ENCODE measurements at regions of chr17 and their contacts with region 1.

Region 1: GRCh38 chr17:53483704-53484103 is 339.0 kb upstream of the KIF2B start:
- DNase-seq: no peak
- ATAC-seq: no peak
- H3K4me3 ChIP-seq: no peak overlapping the region
- H3K27ac ChIP-seq: no peak overlapping the region
- H3K4me1 ChIP-seq: no peaks in the 10 kb centered on the region
- H3K27me3 ChIP-seq: no peaks in the 10 kb centered on the region
- CTCF ChIP-seq: no peak
- EP300 ChIP-seq: no peak
- POLR2A ChIP-seq: no peak
- RAD21 ChIP-seq: no peak

Region 2: GRCh38 chr17:53462393-53462811 is 21.3 kb before region 1 on chr17:
- CTCF ChIA-PET with region 1: no interaction called
- POLR2A ChIA-PET with region 1: no interaction called
- in situ Hi-C with region 1: no loop called
- intact Hi-C with region 1: no loop called
- DNase-seq: no peak
- ATAC-seq: no peak
- H3K4me3 ChIP-seq: no peak overlapping the region
- H3K27ac ChIP-seq: no peak overlapping the region
- H3K4me1 ChIP-seq: no peaks in the 10 kb centered on the region
- H3K27me3 ChIP-seq: no peaks in the 10 kb centered on the region
- CTCF ChIP-seq: no peak
- EP300 ChIP-seq: no peak
- POLR2A ChIP-seq: no peak
- RAD21 ChIP-seq: no peak

Region 3: DNA sequence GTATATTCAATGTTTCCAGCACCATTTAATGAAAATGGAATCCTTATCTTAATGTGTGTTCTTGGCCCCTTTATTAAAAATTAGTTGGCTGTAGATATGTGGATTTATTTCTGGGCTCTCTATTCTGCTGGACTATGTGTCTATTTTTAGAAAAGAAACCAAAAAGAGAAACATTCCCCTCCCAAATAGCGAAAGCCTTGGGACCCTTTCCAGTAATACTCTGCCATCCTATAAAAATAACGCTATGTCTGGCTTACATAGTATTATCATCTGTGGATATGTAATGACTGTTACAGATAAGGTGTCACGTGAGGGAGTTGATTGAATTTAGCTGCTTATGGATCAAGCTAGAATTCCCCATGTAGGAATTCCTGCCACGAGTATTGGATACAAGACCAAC is 59.8 kb after region 1 on chr17:
- CTCF ChIA-PET with region 1: no interaction called
- POLR2A ChIA-PET with region 1: no interaction called
- in situ Hi-C with region 1: loop called (anchors 10 kb)
- intact Hi-C with region 1: no loop called
- DNase-seq: no peak
- ATAC-seq: no peak
- H3K4me3 ChIP-seq: no peak overlapping the region
- H3K27ac ChIP-seq: no peak overlapping the region
- H3K4me1 ChIP-seq: no peaks in the 10 kb centered on the region
- H3K27me3 ChIP-seq: no peaks in the 10 kb centered on the region
- CTCF ChIP-seq: no peak
- EP300 ChIP-seq: no peak
- POLR2A ChIP-seq: no peak
- RAD21 ChIP-seq: no peak